ENCODE measurements at regions of chr1 and their contacts with region 1.

Region 1: GRCh38 chr1:6108937-6109614 is 63.4 kb downstream of the KCNAB2 start:
- DNase-seq: peak; percentile 35
- ATAC-seq: peak; percentile 93
- H3K4me3 ChIP-seq: no peak overlapping the region
- H3K27ac ChIP-seq: no peak overlapping the region
- H3K4me1 ChIP-seq: peaks cover 0 to 4% of the 10 kb centered on the region in 2 experiments; a peak in 1 of 4 replicates
- H3K27me3 ChIP-seq: no peaks in the 10 kb centered on the region
- CTCF ChIP-seq: peak; percentile 69 to 87 (median 79)
- POLR2A ChIP-seq: no peak
- RAD21 ChIP-seq: peak; percentile 97

Region 2: DNA sequence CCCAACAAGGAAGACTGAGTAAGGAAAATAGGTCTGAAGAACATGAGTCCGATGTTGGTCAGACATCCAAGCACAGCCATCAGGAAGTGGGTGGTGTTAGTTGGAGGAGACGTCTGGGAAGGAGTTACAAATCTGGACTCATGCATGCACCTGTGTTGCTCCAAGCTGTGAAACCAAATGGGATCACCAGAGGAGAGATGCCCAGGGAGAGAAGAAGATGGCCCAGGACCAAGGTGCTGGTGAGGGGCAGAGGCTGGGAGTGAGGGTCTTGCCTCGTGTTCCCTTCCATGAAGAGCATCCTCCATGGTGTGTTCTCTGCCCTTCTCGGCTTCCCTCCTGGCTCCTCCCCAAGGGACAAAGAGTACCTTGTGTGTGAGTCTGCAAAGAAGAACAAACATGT is 522.4 kb before region 1 on chr1:
- CTCF ChIA-PET with region 1: no interaction called
- POLR2A ChIA-PET with region 1: no interaction called
- RAD21 ChIA-PET with region 1: no interaction called
- intact Hi-C with region 1: no loop called
- DNase-seq: no peak
- ATAC-seq: no peak
- H3K4me3 ChIP-seq: no peak overlapping the region
- H3K27ac ChIP-seq: no peak overlapping the region
- H3K4me1 ChIP-seq: no peaks in the 10 kb centered on the region
- H3K27me3 ChIP-seq: peaks cover 24% of the 10 kb centered on the region
- CTCF ChIP-seq: no peak
- POLR2A ChIP-seq: no peak
- RAD21 ChIP-seq: no peak

Region 3: GRCh38 chr1:6127587-6128163 is 18.6 kb after region 1 on chr1:
- CTCF ChIA-PET with region 1: interaction called, 4 read pairs
- POLR2A ChIA-PET with region 1: no interaction called
- RAD21 ChIA-PET with region 1: interaction called in 1 of 2 experiments, 9 read pairs
- intact Hi-C with region 1: loop called (anchors 2 kb)
- DNase-seq: peak; percentile 71
- ATAC-seq: peak; percentile 93
- H3K4me3 ChIP-seq: peak overlapping the region in 1 of 2 experiments; percentile 18; a peak in 1 of 4 replicates
- H3K27ac ChIP-seq: peak overlapping the region; percentile 39; the same call in 1 of the 2 replicates
- H3K4me1 ChIP-seq: peaks cover 8 to 15% of the 10 kb centered on the region in 2 experiments; a peak in 3 of 4 replicates
- H3K27me3 ChIP-seq: no peaks in the 10 kb centered on the region
- CTCF ChIP-seq: no peak
- POLR2A ChIP-seq: peak; percentile 36
- RAD21 ChIP-seq: no peak

Region 4: DNA sequence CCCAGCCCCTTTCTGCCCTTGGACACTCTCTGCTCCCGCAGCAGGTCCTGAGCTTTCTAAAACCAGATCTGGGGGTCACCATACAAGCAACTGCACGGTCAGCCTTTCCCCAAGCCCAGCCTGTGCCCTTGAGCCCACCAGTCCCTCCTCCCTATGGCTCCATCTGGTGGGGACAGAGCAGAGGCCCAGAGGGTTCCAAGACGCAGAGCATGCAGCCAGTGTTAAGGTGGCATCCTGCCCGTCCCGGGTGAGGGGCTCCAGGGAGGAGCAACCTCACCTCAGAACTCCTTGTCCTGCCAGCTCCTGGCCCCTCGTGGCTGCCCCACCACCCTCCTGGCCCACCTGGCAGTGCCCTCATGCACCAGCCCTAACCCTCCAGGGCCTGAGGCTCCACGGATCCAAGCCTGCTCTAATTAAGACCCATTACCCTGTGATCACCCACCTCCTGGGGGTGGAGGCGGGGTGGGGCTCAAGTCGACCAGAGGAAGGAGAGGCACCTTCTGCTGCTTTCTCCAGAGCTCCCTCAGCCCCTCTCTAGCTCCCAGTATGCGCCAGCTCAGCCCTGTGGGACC is 62.6 kb after region 1 on chr1:
- CTCF ChIA-PET with region 1: interaction called, 4 read pairs
- POLR2A ChIA-PET with region 1: no interaction called
- RAD21 ChIA-PET with region 1: interaction called, 4 read pairs
- intact Hi-C with region 1: loop called (anchors 1 kb)
- DNase-seq: no peak
- ATAC-seq: peak; percentile 82
- H3K4me3 ChIP-seq: no peak overlapping the region
- H3K27ac ChIP-seq: no peak overlapping the region
- H3K4me1 ChIP-seq: no peaks in the 10 kb centered on the region
- H3K27me3 ChIP-seq: no peaks in the 10 kb centered on the region
- CTCF ChIP-seq: peak; percentile 44 to 70 (median 60); a peak in 5 of 6 replicates
- POLR2A ChIP-seq: no peak
- RAD21 ChIP-seq: peak; percentile 77

Region 5: DNA sequence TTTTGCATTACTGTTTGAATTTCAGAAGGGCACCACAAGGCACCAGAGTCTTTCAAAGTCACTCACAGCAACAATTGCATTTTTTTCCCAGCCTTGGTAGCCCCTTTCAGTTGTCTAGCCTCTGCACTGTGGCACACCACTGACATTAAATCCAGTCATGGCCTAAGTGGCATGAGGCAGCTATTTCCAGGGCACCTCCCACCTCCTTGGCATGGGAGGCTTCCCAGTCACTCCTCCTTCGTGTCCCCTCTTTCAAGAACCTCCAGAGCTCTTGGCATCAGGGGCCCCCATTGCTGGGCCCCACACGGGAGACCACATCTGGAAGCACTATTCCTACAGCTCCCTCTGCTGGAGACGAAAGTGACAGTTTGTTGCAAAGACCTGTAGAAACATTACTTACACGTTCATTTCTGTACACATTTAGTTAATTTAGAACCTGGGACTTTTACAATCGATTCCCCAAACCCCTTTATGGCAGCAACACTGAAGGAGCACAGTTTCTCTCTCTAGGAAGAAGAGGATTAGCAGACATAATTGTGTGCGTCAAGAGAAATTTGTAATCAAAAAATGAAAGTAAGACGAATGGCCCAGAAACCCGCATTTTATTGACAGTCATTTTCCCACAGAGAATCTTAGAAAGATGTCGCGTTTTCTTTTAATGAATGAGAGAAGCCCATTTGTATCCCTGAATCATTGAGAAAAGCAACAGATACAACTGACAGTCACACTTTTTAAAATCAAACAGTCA is 76.7 kb after region 1 on chr1:
- CTCF ChIA-PET with region 1: interaction called, 16 read pairs
- POLR2A ChIA-PET with region 1: no interaction called
- RAD21 ChIA-PET with region 1: no interaction called
- intact Hi-C with region 1: loop called (anchors 2 kb)
- DNase-seq: no peak
- ATAC-seq: peak; percentile 33; the same call in 1 of the 2 replicates
- H3K4me3 ChIP-seq: no peak overlapping the region
- H3K27ac ChIP-seq: no peak overlapping the region
- H3K4me1 ChIP-seq: peaks cover 7 to 15% of the 10 kb centered on the region in 2 experiments
- H3K27me3 ChIP-seq: no peaks in the 10 kb centered on the region
- CTCF ChIP-seq: peak; percentile 61 to 70 (median 68); a peak in 5 of 6 replicates
- POLR2A ChIP-seq: no peak
- RAD21 ChIP-seq: peak; percentile 67